CD8-positive, alpha-beta T cell (primary cell): ENCODE measurements at regions of chr16 and their contacts with region 1.

Region 1: GRCh38 chr16:23640931-23641765 is at the starts of genes DCTN5 and PALB2:
- DNase-seq: peak; percentile 59 to 92 (median 81)
- ATAC-seq: peak; percentile 92
- H3K4me3 ChIP-seq: peak within 1 kb of the TSS; percentile 84 to 99
- H3K4me3 Mint-ChIP-seq: peak within 1 kb of the TSS; percentile 98
- H3K27ac ChIP-seq: peak within 1 kb of the TSS; percentile 83 to 90
- H3K27ac Mint-ChIP-seq: peak within 1 kb of the TSS; percentile 97
- H3K4me1 ChIP-seq: peaks cover 22% of the 10 kb centered on the region
- H3K4me1 Mint-ChIP-seq: peaks cover 39% of the 10 kb centered on the region
- H3K27me3 ChIP-seq: no peaks in the 10 kb centered on the region
- H3K27me3 Mint-ChIP-seq: no peaks in the 10 kb centered on the region
- CTCF ChIP-seq: no peak
- total RNA-seq, gene DCTN5: 53.6 to 57.1 TPM
- total RNA-seq, gene PALB2: 5.3 to 5.6 TPM

Region 2: GRCh38 chr16:23510164-23510914 is 130.8 kb before region 1 on chr16 and contains the start of gene GGA2:
- CTCF ChIA-PET with region 1: no interaction called
- POLR2A ChIA-PET with region 1: no interaction called
- intact Hi-C with region 1: loop called in 1 of 2 experiments (anchors 5 kb)
- DNase-seq: peak; percentile 56 to 89 (median 77)
- ATAC-seq: peak; percentile 81
- H3K4me3 ChIP-seq: peak within 1 kb of the TSS; percentile 63 to 73
- H3K4me3 Mint-ChIP-seq: peak within 1 kb of the TSS; percentile 92
- H3K27ac ChIP-seq: peak within 1 kb of the TSS; percentile 40 to 64
- H3K27ac Mint-ChIP-seq: peak within 1 kb of the TSS; percentile 88
- H3K4me1 ChIP-seq: peaks cover 42% of the 10 kb centered on the region
- H3K4me1 Mint-ChIP-seq: peaks cover 59% of the 10 kb centered on the region
- H3K27me3 ChIP-seq: no peaks in the 10 kb centered on the region
- H3K27me3 Mint-ChIP-seq: no peaks in the 10 kb centered on the region
- CTCF ChIP-seq: no peak
- total RNA-seq, gene GGA2: 220 to 239 TPM

Region 3: GRCh38 chr16:23678430-23679273 is 37.5 kb after region 1 on chr16 and contains the start of gene PLK1:
- CTCF ChIA-PET with region 1: no interaction called
- POLR2A ChIA-PET with region 1: interaction called, 3 read pairs
- intact Hi-C with region 1: loop called in 1 of 2 experiments (anchors 1 kb)
- DNase-seq: peak; percentile 44 to 76 (median 68)
- ATAC-seq: peak; percentile 98
- H3K4me3 ChIP-seq: peak within 1 kb of the TSS; percentile 65 to 71
- H3K4me3 Mint-ChIP-seq: peak within 1 kb of the TSS; percentile 85
- H3K27ac ChIP-seq: no peak within 1 kb of the TSS
- H3K27ac Mint-ChIP-seq: no peak within 1 kb of the TSS
- H3K4me1 ChIP-seq: peaks cover 6% of the 10 kb centered on the region
- H3K4me1 Mint-ChIP-seq: peaks cover 17% of the 10 kb centered on the region
- H3K27me3 ChIP-seq: no peaks in the 10 kb centered on the region
- H3K27me3 Mint-ChIP-seq: no peaks in the 10 kb centered on the region
- CTCF ChIP-seq: no peak
- total RNA-seq, gene PLK1: 0.25 to 0.76 TPM